Heart right ventricle (tissue), 16 donors: ENCODE measurements at regions of chr4 and their contacts with region 1.

Region 1: DNA sequence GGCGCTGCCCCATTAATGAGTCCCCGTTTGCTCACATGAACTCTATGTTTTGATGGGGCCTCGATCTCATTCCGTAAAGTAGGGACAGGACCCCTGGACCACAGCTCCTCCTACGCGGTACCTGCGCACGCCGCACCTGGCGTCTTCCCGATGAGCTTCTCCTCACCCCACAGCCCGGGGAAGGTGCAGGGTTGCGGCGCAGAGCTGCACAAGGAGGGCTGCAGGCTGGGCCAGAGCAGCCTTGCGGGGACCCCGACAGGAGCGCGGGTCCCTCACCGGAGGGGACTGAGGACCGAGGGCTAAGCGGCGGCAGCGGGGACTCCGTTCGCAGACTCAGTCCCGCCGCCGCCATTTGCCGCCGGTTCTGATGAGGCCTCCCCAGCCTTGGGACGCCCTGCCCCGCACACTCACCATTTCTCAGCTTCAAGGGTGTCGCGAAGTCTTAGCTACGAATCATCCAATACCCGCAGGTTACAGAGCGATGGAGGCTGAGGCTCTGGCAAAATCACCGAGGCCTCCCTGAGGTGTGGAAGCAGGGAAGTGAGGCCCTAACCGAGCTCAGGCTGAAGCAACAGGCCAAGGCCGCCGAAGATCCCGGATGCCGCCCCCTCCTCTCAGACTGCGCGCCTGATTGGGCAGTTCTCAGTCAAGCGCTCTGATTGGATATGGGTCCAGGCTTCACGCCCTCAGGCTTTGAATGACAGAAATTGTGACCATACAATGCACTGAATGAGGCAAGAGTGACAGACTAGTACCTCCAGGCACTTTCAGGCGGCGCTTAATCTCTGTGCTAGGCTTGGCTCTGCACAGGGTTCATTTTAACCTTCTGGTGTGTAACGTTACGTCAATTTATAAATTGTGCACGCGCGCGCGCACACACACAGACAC is 25.1 kb downstream of the ZNF721 start:
- DNase-seq: peak; percentile 91 to 98
- ATAC-seq: peak; percentile 99 to 100 (median 100)
- H3K4me3 ChIP-seq: peak overlapping the region; percentile 80 to 99 (median 92)
- H3K27ac ChIP-seq: peak overlapping the region; percentile 44 to 97 (median 92)
- H3K4me1 ChIP-seq: peaks cover 0 to 30% (median 12%) of the 10 kb centered on the region in 9 donors
- H3K27me3 ChIP-seq: no peaks in the 10 kb centered on the region
- CTCF ChIP-seq: no peak

Region 2: GRCh38 chr4:498328-498904 is 24.6 kb after region 1 on chr4:
- intact Hi-C with region 1: loop called in 2 of 10 experiments (anchors 2 kb)
- DNase-seq: no peak
- ATAC-seq: peak; percentile 5 to 44 (median 17)
- H3K4me3 ChIP-seq: peak overlapping the region; percentile 71 to 99 (median 94)
- H3K27ac ChIP-seq: peak overlapping the region; percentile 44 to 93 (median 90)
- H3K4me1 ChIP-seq: peaks cover 7 to 31% (median 17%) of the 10 kb centered on the region in 9 donors
- H3K27me3 ChIP-seq: no peaks in the 10 kb centered on the region
- CTCF ChIP-seq: no peak